Right ventricle myocardium inferior (tissue), 1 donor: ENCODE measurements at regions of chr10 and their contacts with region 1.

Region 1: DNA sequence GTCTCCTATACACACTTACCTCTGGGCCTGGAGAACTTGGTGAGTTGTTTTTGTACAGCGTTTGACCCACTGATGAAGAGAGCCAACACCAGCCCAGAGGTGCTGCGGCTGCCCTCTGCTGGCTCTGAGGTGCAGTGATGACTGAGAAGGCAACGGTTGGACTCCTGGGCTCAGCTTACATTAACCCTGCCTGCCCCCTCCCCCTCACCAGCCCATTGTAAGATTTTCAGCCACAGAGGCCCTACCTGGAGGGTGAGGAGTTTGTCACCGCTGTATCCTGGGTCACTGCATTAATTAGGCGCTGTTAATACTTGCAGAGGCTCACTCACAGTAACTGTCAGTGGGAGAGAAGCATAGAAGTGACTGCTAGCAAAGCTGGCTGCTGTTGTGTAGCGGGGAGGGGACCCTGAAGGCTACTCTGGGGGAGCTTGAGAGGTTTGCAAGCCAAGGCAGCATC is 19.0 kb upstream of the ANKRD2 start:
- DNase-seq: peak; percentile 84
- ATAC-seq: peak; percentile 86

Region 2: GRCh38 chr10:97407211-97407951 is 146.2 kb before region 1 on chr10:
- intact Hi-C with region 1: loop called (anchors 5 kb)
- DNase-seq: no peak
- ATAC-seq: peak; percentile 89

Region 3: GRCh38 chr10:97463363-97464132 is 90.1 kb before region 1 on chr10:
- intact Hi-C with region 1: loop called (anchors 1 kb)
- DNase-seq: no peak
- ATAC-seq: peak; percentile 37

Region 4: GRCh38 chr10:97827778-97828291 is 274.2 kb after region 1 on chr10:
- intact Hi-C with region 1: no loop called
- DNase-seq: no peak
- ATAC-seq: no peak